ENCODE measurements at regions of chr2 and their contacts with region 1.

Region 1: DNA sequence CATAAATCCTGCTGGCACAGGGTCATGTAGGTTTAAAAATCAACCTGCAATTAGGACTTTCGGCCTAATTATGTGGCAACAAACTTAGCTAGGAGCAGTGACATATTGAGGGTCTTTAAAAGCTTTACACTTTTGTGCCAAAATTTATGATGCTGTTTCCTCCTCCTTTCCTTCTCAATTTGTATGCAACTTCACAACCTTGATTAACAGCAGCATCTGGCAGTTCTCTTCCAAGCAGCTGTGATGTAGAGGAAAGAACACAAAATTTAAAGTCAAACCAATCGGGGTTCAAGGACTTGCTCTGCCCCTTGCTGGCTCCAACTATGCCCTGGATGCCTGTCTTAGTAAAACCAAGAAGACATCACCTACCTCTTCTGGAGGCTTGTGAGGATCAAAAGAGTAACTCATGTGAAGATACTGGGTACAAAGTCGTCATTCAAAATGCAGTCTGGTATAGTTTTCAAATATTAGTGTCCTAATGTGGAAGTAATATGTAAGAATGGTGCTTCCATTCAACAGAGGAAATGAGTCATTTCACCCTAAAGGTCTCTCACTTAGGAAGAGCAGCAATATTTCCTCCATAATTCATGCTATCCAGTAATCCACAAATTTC is 94.7 kb downstream of the ANKRD44 start:
- DNase-seq: no peak
- CTCF ChIP-seq: no peak

Region 2: DNA sequence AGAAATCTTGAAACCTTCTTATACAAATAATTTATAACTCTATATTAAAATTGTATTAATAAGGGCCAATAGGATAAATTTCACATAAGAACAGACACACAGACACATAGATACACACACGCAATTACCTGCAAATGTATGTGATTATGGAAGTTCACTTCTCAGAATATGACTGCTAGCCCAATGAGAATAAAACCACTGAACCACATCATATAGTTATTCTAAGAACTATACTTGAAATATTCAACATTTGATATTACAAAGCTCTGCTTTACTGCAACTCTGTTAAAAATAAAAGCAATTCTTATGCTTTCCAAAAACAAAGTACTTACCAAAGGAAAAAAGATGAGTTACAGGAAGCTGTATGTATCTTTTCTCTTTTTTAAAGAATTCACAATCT is 340.4 kb before region 1 on chr2:
- CTCF ChIA-PET with region 1: no interaction called
- POLR2A ChIA-PET with region 1: no interaction called
- DNase-seq: no peak
- CTCF ChIP-seq: no peak

Region 3: GRCh38 chr2:197229509-197230443 is 13.9 kb after region 1 on chr2:
- CTCF ChIA-PET with region 1: interaction called, 18 read pairs
- POLR2A ChIA-PET with region 1: no interaction called
- DNase-seq: no peak
- CTCF ChIP-seq: no peak

Region 4: DNA sequence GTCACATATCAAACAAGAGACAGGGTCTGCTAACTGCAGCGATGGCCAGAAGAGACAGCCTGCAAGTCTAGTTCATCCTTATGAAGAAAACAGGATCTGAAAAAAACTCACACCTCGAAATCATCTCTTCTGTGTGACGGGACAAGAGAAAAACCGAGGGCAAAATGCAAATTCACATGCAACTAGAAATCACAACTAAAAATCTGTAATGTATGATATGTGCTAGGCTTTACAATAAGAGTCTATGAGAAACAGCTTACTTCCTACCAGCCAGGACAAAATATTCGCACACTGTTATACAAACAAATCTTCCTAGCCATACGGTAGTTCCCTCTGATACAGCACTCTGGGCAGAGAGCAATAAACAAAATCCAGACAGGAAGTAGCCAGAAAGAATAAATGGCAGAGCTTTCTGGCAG is 46.0 kb after region 1 on chr2:
- CTCF ChIA-PET with region 1: no interaction called
- POLR2A ChIA-PET with region 1: no interaction called
- DNase-seq: peak; percentile 54
- CTCF ChIP-seq: no peak

Region 5: DNA sequence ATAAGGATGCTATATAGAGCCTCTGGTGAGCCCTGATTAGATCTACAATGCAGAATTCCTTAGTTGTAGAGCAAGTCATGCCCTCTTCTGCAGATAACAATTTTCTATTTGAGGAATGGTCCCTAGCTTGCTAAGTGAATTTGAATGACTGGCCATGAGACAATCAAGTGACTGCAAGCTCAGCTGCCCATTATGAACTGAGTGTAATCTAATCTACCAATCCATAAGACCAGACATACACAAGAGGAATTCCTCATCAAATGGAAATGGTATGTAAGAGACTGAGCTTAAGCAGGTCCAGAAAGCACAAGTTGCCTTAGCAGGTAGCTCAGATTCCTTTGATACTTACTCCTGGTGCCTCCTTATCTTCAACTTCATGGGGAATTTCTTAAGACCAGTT is 99.5 kb after region 1 on chr2:
- CTCF ChIA-PET with region 1: no interaction called
- POLR2A ChIA-PET with region 1: no interaction called
- DNase-seq: no peak
- CTCF ChIP-seq: no peak